CD8-positive, alpha-beta T cell (primary cell): ENCODE measurements at regions of chr10 and their contacts with region 1.

Region 1: GRCh38 chr10:62732841-62733653 is 71.5 kb upstream of the ADO start:
- DNase-seq: peak in 8 of 9 experiments; percentile 33 to 92 (median 64)
- ATAC-seq: peak; percentile 88
- H3K4me3 ChIP-seq: peak overlapping the region in 1 of 2 experiments; percentile 10
- H3K4me3 Mint-ChIP-seq: peak overlapping the region; percentile 1
- H3K27ac ChIP-seq: peak overlapping the region in 1 of 2 experiments; percentile 17
- H3K27ac Mint-ChIP-seq: no peak overlapping the region
- H3K4me1 ChIP-seq: peaks cover 35% of the 10 kb centered on the region
- H3K4me1 Mint-ChIP-seq: peaks cover 6% of the 10 kb centered on the region
- H3K27me3 ChIP-seq: peaks cover 0 to 2% of the 10 kb centered on the region in 2 experiments
- H3K27me3 Mint-ChIP-seq: peaks cover 2% of the 10 kb centered on the region
- CTCF ChIP-seq: no peak

Region 2: DNA sequence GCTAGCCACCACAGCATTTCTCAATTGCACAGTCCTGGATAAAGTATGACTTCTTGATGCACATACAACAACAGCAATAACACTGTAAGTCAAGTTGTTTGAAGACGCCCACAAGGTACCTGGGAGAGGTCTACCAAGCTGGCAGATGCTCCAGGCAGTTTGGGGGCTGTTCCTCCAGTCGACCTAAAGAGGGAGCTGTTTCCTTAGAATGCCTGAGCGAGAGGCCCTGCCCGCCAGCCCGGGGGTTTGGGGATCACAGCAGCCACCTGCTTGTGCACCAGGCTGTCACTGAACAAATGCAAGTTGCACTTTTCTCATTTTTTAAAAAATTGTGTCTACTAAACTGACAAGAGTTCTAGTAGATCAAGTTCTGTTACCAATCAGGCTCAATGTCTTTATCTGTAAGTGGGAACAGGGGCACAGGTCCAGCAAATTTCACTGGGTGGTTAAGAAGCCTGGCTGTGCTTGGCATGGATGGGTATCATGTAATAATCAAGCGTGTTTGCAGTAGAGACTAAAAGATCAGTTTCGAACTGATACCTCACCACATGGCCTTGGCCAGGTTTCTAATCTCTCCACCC is 122.3 kb before region 1 on chr10:
- CTCF ChIA-PET with region 1: interaction called, 4 read pairs
- POLR2A ChIA-PET with region 1: no interaction called
- intact Hi-C with region 1: loop called in 1 of 2 experiments (anchors 5 kb)
- DNase-seq: peak; percentile 48 to 84 (median 70)
- ATAC-seq: peak; percentile 97
- H3K4me3 ChIP-seq: no peak overlapping the region
- H3K4me3 Mint-ChIP-seq: no peak overlapping the region
- H3K27ac ChIP-seq: no peak overlapping the region
- H3K27ac Mint-ChIP-seq: no peak overlapping the region
- H3K4me1 ChIP-seq: no peaks in the 10 kb centered on the region
- H3K4me1 Mint-ChIP-seq: peaks cover 3% of the 10 kb centered on the region
- H3K27me3 ChIP-seq: no peaks in the 10 kb centered on the region
- H3K27me3 Mint-ChIP-seq: no peaks in the 10 kb centered on the region
- CTCF ChIP-seq: peak; percentile 89

Region 3: DNA sequence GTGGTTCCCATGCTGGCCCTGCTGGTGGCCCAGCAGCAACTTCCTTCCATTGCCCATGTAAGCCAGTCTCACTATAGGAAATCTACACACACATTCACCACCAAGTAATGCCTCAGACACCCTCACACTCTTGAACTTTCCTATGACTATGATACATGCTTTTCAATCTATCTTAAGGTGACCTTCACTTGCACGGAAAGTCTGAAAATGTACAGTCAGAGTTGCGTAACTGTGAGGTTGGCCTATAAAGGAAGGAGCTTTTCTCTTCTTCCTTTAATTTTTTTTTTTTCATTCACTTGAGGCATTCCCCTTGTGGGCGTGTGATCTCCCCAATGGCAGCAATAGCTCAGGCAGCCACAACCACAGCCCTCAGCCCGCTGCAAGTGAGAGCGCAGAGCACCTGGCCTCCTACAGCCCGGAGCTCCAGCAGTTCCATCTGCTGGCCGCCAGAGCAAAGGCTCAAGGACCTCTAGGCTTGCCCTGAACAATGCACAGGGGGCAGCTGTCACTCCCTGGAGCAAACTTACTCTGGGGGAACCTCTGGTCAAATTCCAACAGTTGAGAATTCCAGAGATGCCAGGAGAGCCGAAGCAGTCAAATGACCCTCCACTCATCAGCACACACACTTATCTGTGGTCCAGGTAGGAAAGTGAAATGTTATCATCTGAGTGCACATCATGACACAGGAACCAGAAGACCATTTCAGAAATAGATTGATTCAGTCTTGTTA is 51.7 kb before region 1 on chr10:
- CTCF ChIA-PET with region 1: interaction called, 3 read pairs
- POLR2A ChIA-PET with region 1: interaction called, 3 read pairs
- intact Hi-C with region 1: loop called (anchors 5 kb)
- DNase-seq: peak; percentile 18 to 94 (median 57)
- ATAC-seq: peak; percentile 94
- H3K4me3 ChIP-seq: no peak overlapping the region
- H3K4me3 Mint-ChIP-seq: no peak overlapping the region
- H3K27ac ChIP-seq: peak overlapping the region in 1 of 2 experiments; percentile 20
- H3K27ac Mint-ChIP-seq: peak overlapping the region; percentile 58
- H3K4me1 ChIP-seq: peaks cover 14% of the 10 kb centered on the region
- H3K4me1 Mint-ChIP-seq: peaks cover 23% of the 10 kb centered on the region
- H3K27me3 ChIP-seq: no peaks in the 10 kb centered on the region
- H3K27me3 Mint-ChIP-seq: peaks cover 6% of the 10 kb centered on the region
- CTCF ChIP-seq: no peak

Region 4: DNA sequence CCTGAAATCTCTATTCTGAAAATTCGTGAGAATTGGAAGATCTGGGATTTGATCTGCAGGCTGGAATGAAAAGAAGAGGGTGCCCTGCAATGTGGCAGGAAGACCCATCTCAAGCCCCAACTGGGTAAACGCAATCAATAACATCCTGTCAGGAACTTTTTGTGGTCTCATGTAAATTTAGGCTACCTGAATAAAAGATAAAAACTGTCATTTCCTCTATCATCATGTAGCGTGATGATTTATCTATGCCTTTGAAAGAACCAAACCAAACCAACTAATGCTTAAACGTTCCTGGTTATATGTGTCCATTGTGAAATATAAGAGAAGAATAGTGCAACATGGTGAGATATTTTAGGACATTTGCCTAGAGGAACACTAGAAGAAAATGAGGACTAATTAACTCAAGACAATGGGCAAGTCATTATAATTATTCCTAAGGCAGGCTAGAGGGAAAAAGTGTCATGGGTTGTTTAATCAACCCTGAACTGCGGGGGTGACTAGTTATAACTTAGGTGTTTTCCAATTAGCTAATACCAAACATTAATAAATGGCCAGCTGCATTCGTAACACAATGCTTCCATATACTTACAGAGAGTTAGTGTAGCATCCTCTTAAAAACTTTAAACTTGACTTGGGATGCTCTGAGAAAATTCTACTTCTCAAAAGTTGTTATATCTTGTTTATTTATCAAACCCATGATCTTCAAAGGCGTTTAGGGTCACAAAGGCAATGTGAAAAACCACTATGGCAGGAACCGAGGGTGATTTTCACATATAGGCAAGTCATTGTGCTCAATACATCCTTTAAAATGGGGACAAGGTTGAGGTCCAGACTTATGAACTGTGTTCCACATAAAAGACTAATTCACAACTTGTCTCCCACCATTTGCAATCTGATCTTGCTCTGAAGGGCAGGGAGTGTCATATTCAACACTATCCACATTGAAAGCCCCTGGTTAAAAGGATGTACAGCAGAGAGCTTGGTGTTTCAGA is 22.9 kb after region 1 on chr10:
- CTCF ChIA-PET with region 1: no interaction called
- POLR2A ChIA-PET with region 1: no interaction called
- intact Hi-C with region 1: loop called in 1 of 2 experiments (anchors 2 kb)
- DNase-seq: peak in 2 of 9 experiments; percentile 21 to 54
- ATAC-seq: peak; percentile 61
- H3K4me3 ChIP-seq: no peak overlapping the region
- H3K4me3 Mint-ChIP-seq: no peak overlapping the region
- H3K27ac ChIP-seq: no peak overlapping the region
- H3K27ac Mint-ChIP-seq: peak overlapping the region; percentile 28
- H3K4me1 ChIP-seq: peaks cover 19% of the 10 kb centered on the region
- H3K4me1 Mint-ChIP-seq: peaks cover 29% of the 10 kb centered on the region
- H3K27me3 ChIP-seq: no peaks in the 10 kb centered on the region
- H3K27me3 Mint-ChIP-seq: no peaks in the 10 kb centered on the region
- CTCF ChIP-seq: no peak

Region 5: GRCh38 chr10:62804356-62805230 is 71.5 kb after region 1 on chr10 and contains the start of gene ADO:
- CTCF ChIA-PET with region 1: no interaction called
- POLR2A ChIA-PET with region 1: interaction called, 5 read pairs
- intact Hi-C with region 1: loop called (anchors 1 to 2 kb)
- DNase-seq: peak; percentile 52 to 90 (median 78)
- ATAC-seq: peak; percentile 88
- H3K4me3 ChIP-seq: peak within 1 kb of the TSS; percentile 88 to 89
- H3K4me3 Mint-ChIP-seq: peak within 1 kb of the TSS; percentile 97
- H3K27ac ChIP-seq: peak within 1 kb of the TSS; percentile 76 to 98
- H3K27ac Mint-ChIP-seq: peak within 1 kb of the TSS; percentile 99
- H3K4me1 ChIP-seq: peaks cover 29% of the 10 kb centered on the region
- H3K4me1 Mint-ChIP-seq: peaks cover 40% of the 10 kb centered on the region
- H3K27me3 ChIP-seq: no peaks in the 10 kb centered on the region
- H3K27me3 Mint-ChIP-seq: no peaks in the 10 kb centered on the region
- CTCF ChIP-seq: no peak
- total RNA-seq, gene ADO: 12.7 to 13.1 TPM